Dorsolateral prefrontal cortex (tissue), 120 donors: ENCODE measurements at regions of chr7 and their contacts with region 1.

Region 1: DNA sequence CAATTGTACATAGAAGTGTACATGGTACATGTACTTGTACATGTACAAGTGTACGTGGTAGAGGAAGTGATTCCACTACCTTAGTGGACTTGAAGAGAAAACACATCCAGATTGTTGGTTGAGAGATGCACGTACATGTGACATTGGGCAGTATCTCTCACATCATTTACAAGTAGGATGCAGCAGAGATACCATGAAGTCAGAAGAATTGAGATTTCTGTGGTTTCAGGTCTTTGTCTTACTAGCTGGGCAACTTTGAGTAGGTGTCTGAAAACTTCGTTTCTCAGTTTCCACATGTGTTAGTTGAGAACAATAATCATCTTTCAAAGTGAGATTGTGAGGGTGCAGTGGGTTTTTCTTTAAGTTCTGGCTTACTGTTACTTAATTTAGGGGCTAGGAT is 21.5 kb downstream of the CLDN12 start:
- DNase-seq: no peak
- H3K4me3 ChIP-seq: no peak overlapping the region
- H3K27ac ChIP-seq: no peak overlapping the region
- H3K27me3 ChIP-seq: no peaks in the 10 kb centered on the region
- CTCF ChIP-seq: no peak

Region 2: GRCh38 chr7:90155206-90155605 is 269.5 kb before region 1 on chr7:
- intact Hi-C with region 1: loop called (anchors 1 to 5 kb)
- DNase-seq: no peak
- H3K4me3 ChIP-seq: peak overlapping the region in 1 of 59 donors; percentile 64
- H3K27ac ChIP-seq: no peak overlapping the region
- H3K27me3 ChIP-seq: no peaks in the 10 kb centered on the region
- CTCF ChIP-seq: no peak

Region 3: GRCh38 chr7:90312745-90313144 is 112.0 kb before region 1 on chr7:
- intact Hi-C with region 1: loop called in 1 of 2 experiments (anchors 10 kb)
- DNase-seq: no peak
- H3K4me3 ChIP-seq: no peak overlapping the region
- H3K27ac ChIP-seq: no peak overlapping the region
- H3K27me3 ChIP-seq: peaks cover 0 to 5% (median 0%) of the 10 kb centered on the region in 45 donors
- CTCF ChIP-seq: peak in 30 of 56 donors; percentile 5 to 48 (median 24)